ENCODE measurements at regions of chr5 and their contacts with region 1.

Region 1: GRCh38 chr5:43396762-43397304 is 15.4 kb downstream of the CCL28 start:
- DNase-seq: peak; percentile 64
- H3K4me3 ChIP-seq: peak overlapping the region; percentile 39
- H3K27ac ChIP-seq: peak overlapping the region; percentile 43
- H3K4me1 ChIP-seq: no peaks in the 10 kb centered on the region
- H3K27me3 ChIP-seq: no peaks in the 10 kb centered on the region
- CTCF ChIP-seq: no peak

Region 2: GRCh38 chr5:43469702-43470366 is 73.0 kb after region 1 on chr5:
- intact Hi-C with region 1: loop called (anchors 5 kb)
- DNase-seq: no peak
- H3K4me3 ChIP-seq: no peak overlapping the region
- H3K27ac ChIP-seq: no peak overlapping the region
- H3K4me1 ChIP-seq: no peaks in the 10 kb centered on the region
- H3K27me3 ChIP-seq: no peaks in the 10 kb centered on the region
- CTCF ChIP-seq: peak; percentile 31